ENCODE measurements at regions of chr17 and their contacts with region 1.

Region 1: DNA sequence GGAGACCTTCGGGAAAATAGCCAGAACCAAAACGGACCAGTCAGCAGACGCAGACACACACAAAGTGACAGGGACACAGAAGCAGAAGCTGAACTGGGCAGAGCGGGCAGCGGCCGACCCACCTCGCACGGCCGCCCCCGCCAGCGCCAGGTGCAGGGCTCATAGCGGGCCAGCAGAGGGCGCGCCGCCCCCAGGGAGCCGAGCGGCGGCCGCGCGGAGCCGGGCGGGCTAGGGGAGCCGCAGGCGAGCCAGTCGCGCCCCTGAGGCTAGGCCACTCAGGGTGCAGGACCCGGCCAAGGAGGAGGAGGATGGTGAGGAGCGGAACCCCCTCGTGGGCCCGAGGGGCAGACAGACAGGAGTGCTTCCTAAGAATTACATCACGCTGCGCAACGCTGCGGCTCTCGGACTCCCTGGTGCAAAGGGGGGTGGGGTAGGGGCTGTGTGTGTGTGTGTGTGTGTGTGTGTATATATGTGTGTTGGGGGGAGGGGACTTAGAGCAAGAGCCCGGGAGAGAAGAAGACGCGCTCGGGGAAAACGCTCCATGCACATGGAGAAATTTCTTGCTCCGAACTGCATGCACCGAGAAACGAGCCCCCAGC is 913 bp upstream of the NOG start:
- DNase-seq: peak; percentile 64 to 84
- ATAC-seq: peak; percentile 44 to 74
- H3K4me3 ChIP-seq: peak overlapping the region; percentile 51
- H3K27ac ChIP-seq: peak overlapping the region; percentile 75 to 87; a peak in 5 of 6 replicates
- H3K4me1 ChIP-seq: peaks cover 32% of the 10 kb centered on the region
- CTCF ChIP-seq: peak; percentile 99
- EP300 ChIP-seq: no peak
- POLR2A ChIP-seq: no peak
- RAD21 ChIP-seq: peak; percentile 84 to 99

Region 2: GRCh38 chr17:56441331-56441730 is 151.3 kb before region 1 on chr17:
- CTCF ChIA-PET with region 1: no interaction called
- POLR2A ChIA-PET with region 1: no interaction called
- DNase-seq: peak in 1 of 2 experiments; percentile 8
- ATAC-seq: no peak
- H3K4me3 ChIP-seq: no peak overlapping the region
- H3K27ac ChIP-seq: no peak overlapping the region
- H3K4me1 ChIP-seq: no peaks in the 10 kb centered on the region
- CTCF ChIP-seq: no peak
- EP300 ChIP-seq: no peak
- POLR2A ChIP-seq: no peak
- RAD21 ChIP-seq: no peak

Region 3: GRCh38 chr17:56571456-56571855 is 21.1 kb before region 1 on chr17:
- CTCF ChIA-PET with region 1: interaction called, 12 read pairs
- POLR2A ChIA-PET with region 1: no interaction called
- DNase-seq: no peak
- ATAC-seq: no peak
- H3K4me3 ChIP-seq: no peak overlapping the region
- H3K27ac ChIP-seq: no peak overlapping the region
- H3K4me1 ChIP-seq: no peaks in the 10 kb centered on the region
- CTCF ChIP-seq: no peak
- EP300 ChIP-seq: no peak
- POLR2A ChIP-seq: no peak
- RAD21 ChIP-seq: no peak

Region 4: GRCh38 chr17:56656701-56657327 is 64.2 kb after region 1 on chr17:
- CTCF ChIA-PET with region 1: interaction called, 19 read pairs
- POLR2A ChIA-PET with region 1: no interaction called
- DNase-seq: no peak
- ATAC-seq: no peak
- H3K4me3 ChIP-seq: no peak overlapping the region
- H3K27ac ChIP-seq: no peak overlapping the region
- H3K4me1 ChIP-seq: no peaks in the 10 kb centered on the region
- CTCF ChIP-seq: no peak
- EP300 ChIP-seq: no peak
- POLR2A ChIP-seq: no peak
- RAD21 ChIP-seq: no peak

Region 5: DNA sequence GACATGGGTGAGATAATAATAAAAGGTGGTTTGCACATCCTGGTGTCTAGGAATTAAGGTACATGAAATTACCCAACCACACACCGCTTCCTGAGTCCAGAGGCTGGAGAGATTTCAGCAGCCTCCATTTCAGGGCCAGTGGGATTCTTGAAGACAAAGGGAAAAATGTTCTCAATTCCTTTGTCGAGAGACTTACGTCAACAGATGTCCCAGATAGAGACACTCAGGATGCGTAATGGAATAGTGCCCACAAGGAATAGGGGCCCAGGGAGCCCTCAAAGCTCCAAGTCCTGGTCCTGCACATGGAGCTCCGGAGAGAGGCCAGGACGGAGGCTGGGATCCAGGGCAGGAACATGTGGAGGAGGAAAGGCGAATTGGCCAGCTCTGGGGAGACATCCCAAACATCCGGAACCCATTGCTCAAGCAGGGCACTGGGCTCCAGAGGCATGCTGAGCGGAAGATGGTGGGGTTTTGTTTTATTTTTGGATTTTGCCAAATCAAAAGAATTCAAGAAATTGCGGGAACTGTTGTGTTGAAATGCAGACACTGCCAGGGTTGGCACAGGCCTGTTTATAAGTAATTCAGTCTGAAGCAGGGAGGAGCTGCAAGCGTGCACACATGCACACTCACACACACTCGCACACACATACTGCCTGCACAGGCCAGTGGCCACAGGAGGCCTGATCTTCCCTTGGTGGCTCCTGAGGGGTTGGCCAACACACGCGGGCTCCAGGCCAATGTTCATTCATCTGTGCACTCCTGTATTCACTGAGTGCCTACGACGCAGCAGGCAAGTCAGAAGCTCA is 98.1 kb after region 1 on chr17:
- CTCF ChIA-PET with region 1: interaction called, 13 read pairs
- POLR2A ChIA-PET with region 1: interaction called, 3 read pairs
- DNase-seq: no peak
- ATAC-seq: peak; percentile 44 to 57; a peak in 5 of 6 replicates
- H3K4me3 ChIP-seq: no peak overlapping the region
- H3K27ac ChIP-seq: no peak overlapping the region
- H3K4me1 ChIP-seq: no peaks in the 10 kb centered on the region
- CTCF ChIP-seq: no peak
- EP300 ChIP-seq: no peak
- POLR2A ChIP-seq: no peak
- RAD21 ChIP-seq: no peak

Region 6: GRCh38 chr17:56754523-56755208 is 162.1 kb after region 1 on chr17:
- CTCF ChIA-PET with region 1: interaction called, 14 read pairs
- POLR2A ChIA-PET with region 1: no interaction called
- DNase-seq: peak; percentile 53 to 70
- ATAC-seq: peak; percentile 66 to 92; a peak in 5 of 6 replicates
- H3K4me3 ChIP-seq: no peak overlapping the region
- H3K27ac ChIP-seq: peak overlapping the region; percentile 54 to 75
- H3K4me1 ChIP-seq: peaks cover 20% of the 10 kb centered on the region
- CTCF ChIP-seq: no peak
- EP300 ChIP-seq: no peak
- POLR2A ChIP-seq: no peak
- RAD21 ChIP-seq: no peak

Region 7: GRCh38 chr17:56779898-56780733 is 187.5 kb after region 1 on chr17:
- CTCF ChIA-PET with region 1: interaction called, 84 read pairs
- POLR2A ChIA-PET with region 1: interaction called, 9 read pairs
- DNase-seq: peak; percentile 67 to 77
- ATAC-seq: peak; percentile 94 to 98
- H3K4me3 ChIP-seq: peak overlapping the region; percentile 22; the same call in 1 of the 3 replicates
- H3K27ac ChIP-seq: peak overlapping the region in 1 of 2 experiments; percentile 64; a peak in 3 of 6 replicates
- H3K4me1 ChIP-seq: peaks cover 6% of the 10 kb centered on the region; the same call in 2 of the 3 replicates
- CTCF ChIP-seq: peak; percentile 99
- EP300 ChIP-seq: no peak
- POLR2A ChIP-seq: no peak
- RAD21 ChIP-seq: peak; percentile 91 to 98